Activated CD4-positive, alpha-beta memory T cell treated with anti-CD3 and anti-CD28 coated beads, Interleukin-2, amount 10 ng/mL, durations not matched to agents 7 days and 5 days (primary cell): ENCODE measurements at regions of chr11 and their contacts with region 1.

Region 1: DNA sequence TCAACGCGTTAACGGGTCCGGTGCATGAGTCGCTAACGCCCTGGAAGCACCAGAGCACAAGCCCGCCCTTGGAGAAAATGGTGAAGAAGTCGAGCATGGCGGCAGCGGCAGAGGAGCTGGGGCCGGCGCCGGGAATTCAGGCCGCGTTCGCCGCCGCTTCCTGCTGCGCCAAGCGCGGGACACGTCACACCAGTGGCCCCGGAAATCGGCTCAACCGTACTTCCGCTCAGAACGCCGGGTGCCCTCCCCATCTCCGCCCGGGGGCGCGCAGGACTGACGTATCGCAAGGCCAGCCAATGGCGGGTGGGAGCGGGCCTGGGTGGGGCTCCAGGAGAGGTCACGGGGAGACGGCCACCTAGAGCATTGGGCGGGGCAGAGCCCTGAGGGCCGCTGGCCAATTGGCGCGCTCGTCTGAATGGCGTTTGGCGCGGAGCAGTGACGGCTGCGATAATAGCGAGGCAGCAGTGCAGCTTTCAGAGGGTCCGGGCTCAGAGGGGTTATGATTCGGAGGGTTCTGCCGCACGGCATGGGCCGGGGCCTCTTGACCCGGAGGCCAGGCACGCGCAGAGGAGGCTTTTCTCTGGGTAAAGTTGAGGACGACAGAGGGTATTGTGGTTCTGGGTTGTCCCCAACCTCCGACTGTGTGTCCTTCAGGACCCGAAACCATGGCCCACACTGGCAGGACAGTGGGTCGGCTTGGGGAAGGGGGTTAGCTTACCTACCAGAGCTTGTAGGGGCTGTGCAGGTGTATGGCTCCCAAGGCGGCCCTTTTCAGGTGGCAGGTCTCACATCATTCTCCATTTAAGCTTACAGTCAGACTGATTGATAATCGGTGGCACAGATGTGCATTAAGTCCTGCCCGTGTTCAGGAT is at the starts of genes FOXRED1 and SRPRA:
- DNase-seq: peak; percentile 100
- H3K4me3 Mint-ChIP-seq: peak within 1 kb of the TSS; percentile 98
- H3K27ac Mint-ChIP-seq: peak within 1 kb of the TSS; percentile 94
- H3K4me1 Mint-ChIP-seq: peaks cover 52% of the 10 kb centered on the region
- H3K27me3 Mint-ChIP-seq: no peaks in the 10 kb centered on the region
- total RNA-seq, gene FOXRED1: 34.4 to 36.4 TPM
- total RNA-seq, gene SRPRA: 121 to 125 TPM

Region 2: GRCh38 chr11:125592305-125593112 is 676.4 kb before region 1 on chr11 and contains the start of gene STT3A:
- CTCF ChIA-PET with region 1: no interaction called
- POLR2A ChIA-PET with region 1: interaction called, 10 read pairs
- DNase-seq: peak; percentile 98
- H3K4me3 Mint-ChIP-seq: peak within 1 kb of the TSS; percentile 96
- H3K27ac Mint-ChIP-seq: peak within 1 kb of the TSS; percentile 91
- H3K4me1 Mint-ChIP-seq: peaks cover 57% of the 10 kb centered on the region
- H3K27me3 Mint-ChIP-seq: no peaks in the 10 kb centered on the region
- total RNA-seq, gene STT3A: 123 TPM

Region 3: DNA sequence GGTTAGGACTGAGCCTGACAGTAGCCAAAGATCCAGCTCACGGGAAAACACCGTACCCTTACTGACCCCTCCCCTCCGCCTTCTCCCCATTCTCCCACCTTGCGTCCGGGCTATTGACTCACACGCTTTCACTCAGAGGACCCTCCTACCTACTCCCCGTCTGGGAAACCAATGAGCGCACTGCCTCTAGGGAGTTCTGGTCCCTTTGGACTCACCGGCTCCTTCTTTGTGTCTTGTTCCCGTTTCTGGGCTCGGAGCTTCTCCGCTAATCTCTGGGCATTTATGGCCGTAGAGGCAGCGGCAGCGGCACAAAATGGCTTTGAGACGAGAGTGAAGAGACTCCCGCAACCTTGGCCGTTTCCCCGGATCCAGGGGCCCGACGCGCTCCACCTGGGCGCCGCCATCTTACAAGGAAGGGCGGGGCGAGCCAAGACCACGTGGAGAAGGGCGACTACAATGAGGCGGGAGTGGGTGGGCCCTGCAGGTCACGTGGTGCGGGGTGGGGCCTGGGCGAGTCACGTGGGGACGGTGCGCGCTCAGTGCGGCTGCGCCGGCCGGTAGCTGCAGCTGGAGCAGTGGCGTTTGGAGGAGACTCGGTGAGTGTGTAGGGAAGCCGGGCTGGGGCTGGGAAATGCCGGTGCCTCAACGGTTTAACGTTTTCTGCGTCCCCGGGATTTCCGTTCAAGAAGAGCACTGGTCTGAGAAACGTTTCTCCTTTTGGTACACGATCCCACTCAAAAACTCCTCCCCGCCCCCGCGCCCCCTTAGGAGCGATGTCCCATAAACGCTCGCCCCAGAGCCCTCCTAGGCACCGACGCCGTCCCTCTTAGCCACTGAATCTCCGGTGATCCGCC is 57.5 kb before region 1 on chr11 and contains the starts of genes FAM118B and RPUSD4:
- CTCF ChIA-PET with region 1: interaction called, 3 read pairs
- POLR2A ChIA-PET with region 1: interaction called, 23 read pairs
- DNase-seq: peak; percentile 99
- H3K4me3 Mint-ChIP-seq: peak within 1 kb of the TSS; percentile 98
- H3K27ac Mint-ChIP-seq: peak within 1 kb of the TSS; percentile 84
- H3K4me1 Mint-ChIP-seq: peaks cover 43% of the 10 kb centered on the region
- H3K27me3 Mint-ChIP-seq: peaks cover 7% of the 10 kb centered on the region
- total RNA-seq, gene FAM118B: 9.0 to 9.9 TPM
- total RNA-seq, gene RPUSD4: 26.5 to 26.8 TPM

Region 4: GRCh38 chr11:126257764-126258163 is 11.2 kb before region 1 on chr11:
- CTCF ChIA-PET with region 1: no interaction called
- POLR2A ChIA-PET with region 1: interaction called, 10 read pairs
- DNase-seq: no peak
- H3K4me3 Mint-ChIP-seq: no peak overlapping the region
- H3K27ac Mint-ChIP-seq: no peak overlapping the region
- H3K4me1 Mint-ChIP-seq: no peaks in the 10 kb centered on the region
- H3K27me3 Mint-ChIP-seq: no peaks in the 10 kb centered on the region

Region 5: GRCh38 chr11:126282736-126283591 is 14.0 kb after region 1 on chr11 and contains the start of gene TIRAP:
- CTCF ChIA-PET with region 1: interaction called, 12 read pairs
- POLR2A ChIA-PET with region 1: interaction called, 78 read pairs
- DNase-seq: peak; percentile 70
- H3K4me3 Mint-ChIP-seq: peak within 1 kb of the TSS; percentile 100
- H3K27ac Mint-ChIP-seq: peak within 1 kb of the TSS; percentile 99
- H3K4me1 Mint-ChIP-seq: peaks cover 54% of the 10 kb centered on the region
- H3K27me3 Mint-ChIP-seq: no peaks in the 10 kb centered on the region
- total RNA-seq, gene TIRAP: 14.2 to 17.0 TPM

Region 6: DNA sequence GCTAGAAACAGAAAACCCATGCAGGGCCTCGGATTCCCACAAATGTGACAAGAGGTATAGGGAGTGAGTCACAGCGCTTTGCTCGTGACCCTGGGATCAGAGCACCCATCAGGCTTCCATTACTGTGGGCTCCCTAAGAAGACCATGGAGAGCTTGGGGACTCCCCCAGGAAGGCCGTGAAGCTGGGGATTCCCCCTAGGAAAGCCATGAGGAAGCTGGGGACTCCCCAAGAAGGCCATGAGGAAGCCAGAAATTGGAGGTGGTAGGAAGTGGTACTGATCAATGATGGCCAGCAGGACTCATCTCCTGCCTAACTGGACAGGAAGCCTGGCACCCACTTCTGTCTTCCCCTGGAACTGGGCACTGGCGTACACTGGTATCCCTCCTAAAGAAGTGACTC is 24.8 kb after region 1 on chr11:
- CTCF ChIA-PET with region 1: no interaction called
- POLR2A ChIA-PET with region 1: no interaction called
- DNase-seq: no peak
- H3K4me3 Mint-ChIP-seq: no peak overlapping the region
- H3K27ac Mint-ChIP-seq: no peak overlapping the region
- H3K4me1 Mint-ChIP-seq: peaks cover 7% of the 10 kb centered on the region
- H3K27me3 Mint-ChIP-seq: no peaks in the 10 kb centered on the region

Region 7: GRCh38 chr11:126303623-126304456 is 34.9 kb after region 1 on chr11 and contains the start of gene DCPS:
- CTCF ChIA-PET with region 1: no interaction called
- POLR2A ChIA-PET with region 1: interaction called, 14 read pairs
- DNase-seq: peak; percentile 90
- H3K4me3 Mint-ChIP-seq: peak within 1 kb of the TSS; percentile 77
- H3K27ac Mint-ChIP-seq: peak within 1 kb of the TSS; percentile 75
- H3K4me1 Mint-ChIP-seq: peaks cover 30% of the 10 kb centered on the region
- H3K27me3 Mint-ChIP-seq: no peaks in the 10 kb centered on the region
- total RNA-seq, gene DCPS: 34.5 to 35.8 TPM